ENCODE measurements at regions of chr1 and their contacts with region 1.

Region 1: GRCh38 chr1:153985941-153986761 is at the start of gene RAB13:
- DNase-seq: peak; percentile 86
- H3K4me3 Mint-ChIP-seq: peak within 1 kb of the TSS; percentile 84
- H3K27ac Mint-ChIP-seq: peak within 1 kb of the TSS; percentile 67
- H3K4me1 Mint-ChIP-seq: peaks cover 48% of the 10 kb centered on the region
- H3K27me3 Mint-ChIP-seq: peaks cover 12% of the 10 kb centered on the region
- CTCF ChIP-seq: no peak
- total RNA-seq, gene RAB13: 87.5 and 95.0 TPM in 2 replicates

Region 2: GRCh38 chr1:153352523-153352922 is 633.6 kb before region 1 on chr1:
- CTCF ChIA-PET with region 1: no interaction called
- intact Hi-C with region 1: loop called (anchors 10 kb)
- DNase-seq: peak; percentile 73
- H3K4me3 Mint-ChIP-seq: no peak overlapping the region
- H3K27ac Mint-ChIP-seq: no peak overlapping the region
- H3K4me1 Mint-ChIP-seq: peaks cover 26% of the 10 kb centered on the region
- H3K27me3 Mint-ChIP-seq: peaks cover 65% of the 10 kb centered on the region
- CTCF ChIP-seq: peak; percentile 93

Region 3: GRCh38 chr1:153677718-153678505 is 308.2 kb before region 1 on chr1:
- CTCF ChIA-PET with region 1: interaction called, 3 read pairs
- intact Hi-C with region 1: loop called (anchors 5 kb)
- DNase-seq: peak; percentile 66
- H3K4me3 Mint-ChIP-seq: peak overlapping the region; percentile 71
- H3K27ac Mint-ChIP-seq: peak overlapping the region; percentile 62
- H3K4me1 Mint-ChIP-seq: peaks cover 25% of the 10 kb centered on the region
- H3K27me3 Mint-ChIP-seq: peaks cover 61% of the 10 kb centered on the region
- CTCF ChIP-seq: peak; percentile 96

Region 4: GRCh38 chr1:153816283-153816889 is 169.8 kb before region 1 on chr1:
- CTCF ChIA-PET with region 1: no interaction called
- intact Hi-C with region 1: loop called (anchors 1 kb)
- DNase-seq: no peak
- H3K4me3 Mint-ChIP-seq: no peak overlapping the region
- H3K27ac Mint-ChIP-seq: no peak overlapping the region
- H3K4me1 Mint-ChIP-seq: no peaks in the 10 kb centered on the region
- H3K27me3 Mint-ChIP-seq: no peaks in the 10 kb centered on the region
- CTCF ChIP-seq: no peak

Region 5: DNA sequence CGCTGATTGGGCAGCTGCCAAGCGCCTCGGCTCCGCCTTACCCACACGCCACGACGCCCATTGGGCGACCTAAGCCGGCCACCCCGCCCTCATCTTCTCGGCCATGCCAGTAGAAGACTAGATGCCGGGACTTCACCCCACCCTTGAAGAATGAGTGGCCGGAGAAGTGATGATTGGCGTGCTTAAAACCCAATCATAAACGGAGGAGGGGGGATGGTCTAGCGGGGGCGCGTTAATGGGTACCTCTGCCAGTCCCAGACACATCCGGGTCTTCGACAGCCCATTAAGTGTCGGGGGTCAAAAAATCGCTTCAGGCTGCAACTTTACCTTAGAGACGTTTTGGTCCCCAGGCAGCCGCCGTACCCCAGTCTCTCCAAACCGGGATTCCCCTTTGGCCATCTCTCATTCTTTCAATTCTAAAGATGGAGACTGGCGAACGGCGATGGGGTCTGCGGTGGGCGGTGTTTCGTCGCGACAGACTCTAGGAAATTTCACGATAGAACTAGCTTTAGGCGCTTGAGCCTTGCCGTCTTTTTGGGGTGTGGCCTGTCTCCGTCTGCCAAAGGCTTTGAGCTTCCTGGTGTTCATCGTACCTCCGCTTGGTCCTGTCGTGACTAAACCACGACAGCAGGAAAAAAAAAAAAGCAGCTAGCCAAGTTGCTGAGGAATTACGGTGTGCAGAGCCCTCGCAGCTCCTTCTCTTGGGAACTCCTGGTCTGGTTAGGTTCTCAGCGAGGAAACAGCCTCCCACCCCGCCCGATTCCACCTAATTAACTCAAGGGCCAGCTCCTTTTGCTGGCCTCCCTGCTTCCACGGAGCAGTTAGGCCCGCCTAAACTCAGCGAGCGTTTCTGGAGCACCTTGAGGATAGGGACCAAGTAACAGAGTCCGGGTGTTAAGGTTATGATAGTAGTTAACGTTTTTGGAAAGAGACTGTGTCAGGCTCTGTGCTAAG is 62.9 kb before region 1 on chr1 and contains the start of gene GATAD2B:
- CTCF ChIA-PET with region 1: interaction called, 11 read pairs
- intact Hi-C with region 1: loop called (anchors 2 kb)
- DNase-seq: peak; percentile 100
- H3K4me3 Mint-ChIP-seq: peak within 1 kb of the TSS; percentile 74
- H3K27ac Mint-ChIP-seq: peak within 1 kb of the TSS; percentile 91
- H3K4me1 Mint-ChIP-seq: peaks cover 25% of the 10 kb centered on the region
- H3K27me3 Mint-ChIP-seq: no peaks in the 10 kb centered on the region
- CTCF ChIP-seq: no peak
- total RNA-seq, gene GATAD2B: 58.3 and 62.5 TPM in 2 replicates

Region 6: DNA sequence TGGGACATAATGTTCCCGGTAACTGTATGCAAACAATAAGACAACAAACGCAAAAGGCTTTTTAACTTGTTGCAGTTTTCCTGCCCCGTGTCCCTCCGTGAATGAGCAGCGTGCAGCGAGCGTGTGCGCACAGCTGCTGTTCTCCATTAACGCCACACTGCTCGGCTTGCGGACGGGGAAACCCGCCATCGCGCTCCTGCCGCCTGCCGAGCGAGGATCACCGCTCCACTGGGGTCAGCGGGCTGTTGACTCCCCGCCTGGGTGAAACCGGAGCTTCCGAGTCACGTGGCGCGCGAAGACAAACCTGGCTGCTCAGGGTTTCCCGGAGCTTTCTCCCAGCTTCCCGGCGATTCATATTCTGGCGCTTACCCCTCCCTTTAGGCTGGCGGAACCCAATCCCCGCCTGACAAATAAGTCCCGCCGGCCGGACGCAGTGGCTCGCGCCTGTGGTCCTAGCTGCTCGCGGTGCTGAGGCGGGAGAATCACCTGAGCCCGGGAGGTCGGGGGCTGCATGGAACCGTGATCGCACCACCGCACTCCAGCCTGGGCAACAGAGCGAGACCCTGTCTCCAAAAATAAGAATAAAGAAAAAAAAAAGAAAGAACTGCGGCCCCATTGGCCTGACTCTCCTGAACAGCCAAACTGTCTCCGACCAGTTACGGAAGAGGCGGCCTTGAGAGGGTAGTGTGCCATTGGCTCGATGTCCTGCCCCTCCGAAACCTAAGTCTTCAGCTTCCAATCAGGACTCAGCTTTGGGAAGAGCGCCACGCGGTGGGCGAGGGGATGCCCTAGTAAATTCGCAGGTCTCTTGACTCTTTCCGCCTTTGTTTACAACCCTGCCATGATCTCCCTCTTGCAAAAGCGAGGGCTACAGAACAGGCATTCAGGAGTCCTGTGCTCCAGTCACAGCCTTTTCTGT is 18.8 kb before region 1 on chr1 and contains the start of gene CREB3L4:
- CTCF ChIA-PET with region 1: interaction called, 18 read pairs
- intact Hi-C with region 1: no loop called
- DNase-seq: peak; percentile 92
- H3K4me3 Mint-ChIP-seq: peak within 1 kb of the TSS; percentile 90
- H3K27ac Mint-ChIP-seq: peak within 1 kb of the TSS; percentile 95
- H3K4me1 Mint-ChIP-seq: peaks cover 37% of the 10 kb centered on the region
- H3K27me3 Mint-ChIP-seq: no peaks in the 10 kb centered on the region
- CTCF ChIP-seq: no peak
- total RNA-seq, gene CREB3L4: 23.2 and 26.5 TPM in 2 replicates

Measured in Calu3 (cell line).